ENCODE measurements at regions of chr11 and their contacts with region 1.

Region 1: DNA sequence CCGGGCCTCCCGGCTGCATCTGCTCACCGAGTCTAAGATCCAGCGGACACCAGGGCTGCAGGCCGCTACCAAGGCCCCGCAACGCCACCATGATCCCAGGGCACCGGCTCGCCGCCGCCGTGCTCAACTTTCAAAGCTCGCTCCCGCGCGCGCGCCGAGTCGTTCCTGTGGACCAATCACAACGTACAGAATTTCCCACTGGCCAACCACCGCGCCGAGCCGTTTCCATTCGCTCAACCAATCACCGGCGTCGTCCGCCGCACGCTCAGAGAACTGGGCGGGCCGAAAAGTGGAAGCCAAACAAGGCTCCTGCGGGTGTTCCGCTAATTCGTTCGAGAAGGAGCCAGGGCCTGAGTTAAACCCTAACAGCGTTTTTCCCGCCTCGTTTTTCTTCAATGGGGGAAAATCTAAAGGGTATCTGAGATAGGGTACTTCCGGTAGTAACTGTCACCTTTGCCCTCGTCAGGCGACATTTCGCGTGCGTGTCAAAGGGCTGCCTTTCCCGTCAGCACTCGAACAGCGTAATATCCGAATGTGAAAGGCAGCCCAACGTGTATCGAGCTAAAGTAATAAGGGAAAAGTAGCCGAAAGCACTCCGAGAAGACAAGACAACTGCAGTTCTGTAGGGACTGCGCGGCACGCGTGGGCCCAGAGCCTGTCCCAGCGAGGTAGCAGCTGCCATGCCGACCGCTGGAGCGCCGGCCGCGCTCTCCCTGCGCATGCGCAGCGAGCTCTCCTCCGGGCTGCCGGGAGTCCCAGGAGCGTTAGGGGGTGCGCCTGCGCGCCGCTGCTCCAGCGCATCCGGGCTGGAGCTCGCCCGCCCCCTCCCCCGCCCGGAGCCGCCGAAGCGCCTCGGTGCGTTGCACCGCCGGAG is at the starts of genes NCAPD3 and VPS26B:
- DNase-seq: peak; percentile 93 to 96
- ATAC-seq: peak; percentile 93
- H3K4me3 ChIP-seq: peak within 1 kb of the TSS; percentile 78 to 88 (median 85)
- H3K27ac ChIP-seq: peak within 1 kb of the TSS; percentile 89 to 98 (median 98)
- H3K4me1 ChIP-seq: peaks cover 32 to 37% of the 10 kb centered on the region in 2 donors
- H3K27me3 ChIP-seq: no peaks in the 10 kb centered on the region
- CTCF ChIP-seq: peak in 1 of 5 experiments; percentile 9
- POLR2A ChIP-seq: peak; percentile 99 to 100
- total RNA-seq, gene NCAPD3: 3.6 to 6.7 (median 4.5) TPM
- total RNA-seq, gene VPS26B: 15.4 to 32.9 (median 22.2) TPM

Region 2: GRCh38 chr11:133956650-133957633 is 267.1 kb before region 1 on chr11 and contains the start of gene IGSF9B:
- in situ Hi-C with region 1: no loop called
- intact Hi-C with region 1: loop called (anchors 10 kb)
- DNase-seq: peak; percentile 69 to 80
- ATAC-seq: peak; percentile 83 to 89
- H3K4me3 ChIP-seq: peak within 1 kb of the TSS; percentile 57 to 67 (median 60)
- H3K27ac ChIP-seq: peak within 1 kb of the TSS in 1 of 4 donors; percentile 39
- H3K4me1 ChIP-seq: peaks cover 15 to 19% of the 10 kb centered on the region in 2 donors
- H3K27me3 ChIP-seq: peaks cover 11 to 21% (median 11%) of the 10 kb centered on the region in 3 donors
- CTCF ChIP-seq: no peak
- POLR2A ChIP-seq: peak; percentile 47 to 74
- total RNA-seq, gene IGSF9B: 0.07 to 2.5 (median 1.4) TPM

Region 3: GRCh38 chr11:134119094-134119493 is 105.0 kb before region 1 on chr11:
- in situ Hi-C with region 1: no loop called
- intact Hi-C with region 1: loop called (anchors 5 kb)
- DNase-seq: no peak
- ATAC-seq: no peak
- H3K4me3 ChIP-seq: no peak overlapping the region
- H3K27ac ChIP-seq: peak overlapping the region in 3 of 4 donors; percentile 76 to 80 (median 77)
- H3K4me1 ChIP-seq: peaks cover 24 to 32% of the 10 kb centered on the region in 2 donors
- H3K27me3 ChIP-seq: peaks cover 0 to 3% (median 0%) of the 10 kb centered on the region in 3 donors
- CTCF ChIP-seq: no peak
- POLR2A ChIP-seq: no peak

Region 4: GRCh38 chr11:134253188-134253993 is 29.3 kb after region 1 on chr11 and contains the starts of genes ACAD8 and THYN1:
- in situ Hi-C with region 1: no loop called
- intact Hi-C with region 1: loop called (anchors 1 kb)
- DNase-seq: peak; percentile 96
- ATAC-seq: peak; percentile 96 to 97
- H3K4me3 ChIP-seq: peak within 1 kb of the TSS; percentile 95 to 100 (median 96)
- H3K27ac ChIP-seq: peak within 1 kb of the TSS; percentile 70 to 87 (median 82)
- H3K4me1 ChIP-seq: peaks cover 24 to 30% of the 10 kb centered on the region in 2 donors
- H3K27me3 ChIP-seq: no peaks in the 10 kb centered on the region
- CTCF ChIP-seq: peak; percentile 49 to 75 (median 60)
- POLR2A ChIP-seq: peak; percentile 61 to 62
- total RNA-seq, gene ACAD8: 19.4 to 29.6 (median 24.7) TPM
- total RNA-seq, gene THYN1: 12.7 to 27.8 (median 17.2) TPM

Region 5: DNA sequence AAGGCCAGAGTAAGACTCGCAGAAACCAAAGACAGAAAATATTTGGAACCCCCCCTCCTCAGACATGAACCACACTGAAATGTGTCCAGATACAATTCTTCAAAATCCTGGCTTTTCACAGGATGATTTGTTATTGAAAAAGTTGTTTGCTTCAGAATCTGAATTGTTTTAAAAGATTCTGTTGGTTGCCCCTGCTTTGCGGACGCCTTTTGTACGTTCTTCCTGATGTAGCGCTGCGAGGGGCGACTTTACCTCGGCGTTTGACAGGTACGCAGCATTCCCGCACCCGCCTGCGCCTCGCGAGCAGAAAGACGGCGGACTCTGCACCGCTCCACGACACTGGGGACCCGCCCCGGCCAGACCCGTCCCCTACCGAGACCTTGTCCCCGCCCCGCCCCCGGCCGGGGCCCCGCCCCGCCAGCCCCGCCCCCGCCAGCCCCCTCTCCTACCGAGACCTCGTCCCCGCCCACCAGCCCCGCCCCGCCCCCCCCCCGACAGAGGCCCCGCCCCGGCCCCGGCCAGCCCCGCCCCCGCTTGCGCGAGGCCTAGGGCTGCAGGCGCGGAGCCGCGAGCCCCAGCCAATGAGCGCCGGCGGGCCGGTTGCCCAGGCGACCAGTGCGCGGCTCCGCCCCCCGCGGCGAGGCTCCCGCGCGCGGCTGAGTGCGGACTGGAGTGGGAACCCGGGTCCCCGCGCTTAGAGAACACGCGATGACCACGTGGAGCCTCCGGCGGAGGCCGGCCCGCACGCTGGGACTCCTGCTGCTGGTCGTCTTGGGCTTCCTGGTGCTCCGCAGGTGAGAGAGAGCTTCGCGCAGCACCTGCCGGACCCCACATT is 107.5 kb after region 1 on chr11 and contains the start of gene GLB1L2:
- in situ Hi-C with region 1: no loop called
- intact Hi-C with region 1: loop called (anchors 10 kb)
- DNase-seq: peak; percentile 43 to 68
- ATAC-seq: peak; percentile 87 to 89
- H3K4me3 ChIP-seq: peak within 1 kb of the TSS; percentile 58 to 71 (median 68)
- H3K27ac ChIP-seq: no peak within 1 kb of the TSS
- H3K4me1 ChIP-seq: peaks cover 0 to 13% of the 10 kb centered on the region in 2 donors
- H3K27me3 ChIP-seq: peaks cover 0 to 6% (median 2%) of the 10 kb centered on the region in 3 donors
- CTCF ChIP-seq: no peak
- POLR2A ChIP-seq: no peak
- total RNA-seq, gene GLB1L2: 0.33 to 2.9 (median 0.76) TPM in 3 of 4 donors, not detected in the other